ENCODE measurements at regions of chr16 and their contacts with region 1.

Region 1: GRCh38 chr16:74862741-74863244 is 88.2 kb upstream of the FA2H start:
- DNase-seq: peak; percentile 63
- ATAC-seq: no peak
- H3K4me3 ChIP-seq: no peak overlapping the region
- H3K4me3 Mint-ChIP-seq: no peak overlapping the region
- H3K27ac ChIP-seq: no peak overlapping the region
- H3K27ac Mint-ChIP-seq: peak overlapping the region; percentile 26
- H3K4me1 ChIP-seq: no peaks in the 10 kb centered on the region
- H3K4me1 Mint-ChIP-seq: peaks cover 3% of the 10 kb centered on the region
- H3K27me3 ChIP-seq: no peaks in the 10 kb centered on the region
- H3K27me3 Mint-ChIP-seq: no peaks in the 10 kb centered on the region
- CTCF ChIP-seq: peak; percentile 80

Region 2: GRCh38 chr16:74695450-74696422 is 167.1 kb before region 1 on chr16:
- CTCF ChIA-PET with region 1: interaction called, 26 read pairs
- POLR2A ChIA-PET with region 1: no interaction called
- intact Hi-C with region 1: no loop called
- DNase-seq: peak; percentile 81
- ATAC-seq: peak; percentile 85
- H3K4me3 ChIP-seq: peak overlapping the region in 4 of 5 experiments; percentile 26 to 60 (median 42)
- H3K4me3 Mint-ChIP-seq: peak overlapping the region; percentile 89
- H3K27ac ChIP-seq: peak overlapping the region; percentile 34 to 44
- H3K27ac Mint-ChIP-seq: peak overlapping the region; percentile 72
- H3K4me1 ChIP-seq: peaks cover 23 to 29% of the 10 kb centered on the region in 2 donors
- H3K4me1 Mint-ChIP-seq: peaks cover 37% of the 10 kb centered on the region
- H3K27me3 ChIP-seq: no peaks in the 10 kb centered on the region
- H3K27me3 Mint-ChIP-seq: no peaks in the 10 kb centered on the region
- CTCF ChIP-seq: no peak

Region 3: GRCh38 chr16:74813109-74813641 is 49.6 kb before region 1 on chr16:
- CTCF ChIA-PET with region 1: interaction called, 13 read pairs
- POLR2A ChIA-PET with region 1: no interaction called
- intact Hi-C with region 1: loop called (anchors 2 kb)
- DNase-seq: peak; percentile 63
- ATAC-seq: peak; percentile 99
- H3K4me3 ChIP-seq: no peak overlapping the region
- H3K4me3 Mint-ChIP-seq: no peak overlapping the region
- H3K27ac ChIP-seq: no peak overlapping the region
- H3K27ac Mint-ChIP-seq: no peak overlapping the region
- H3K4me1 ChIP-seq: peaks cover 0 to 5% of the 10 kb centered on the region in 2 donors
- H3K4me1 Mint-ChIP-seq: peaks cover 2% of the 10 kb centered on the region
- H3K27me3 ChIP-seq: peaks cover 0 to 5% (median 0%) of the 10 kb centered on the region in 4 experiments
- H3K27me3 Mint-ChIP-seq: peaks cover 10% of the 10 kb centered on the region
- CTCF ChIP-seq: peak; percentile 92

Region 4: DNA sequence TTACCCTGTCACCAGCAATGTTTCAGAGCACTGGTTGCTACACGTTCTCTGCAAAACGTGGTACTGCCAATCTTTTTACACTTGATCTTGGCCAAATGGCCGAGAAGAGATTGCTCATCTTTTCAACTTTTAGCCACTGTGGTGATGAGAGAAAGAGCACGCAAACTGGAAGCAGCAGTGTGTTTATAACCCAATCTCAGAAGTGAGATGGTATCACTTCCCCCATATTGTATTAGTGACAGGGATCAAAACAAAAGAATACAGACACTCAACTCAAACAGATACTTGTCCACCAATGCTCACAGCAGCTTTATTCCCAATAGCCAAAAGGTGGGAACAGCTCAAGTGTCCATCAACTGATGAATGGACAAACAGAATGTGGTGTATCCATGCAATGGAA is 16.1 kb before region 1 on chr16:
- CTCF ChIA-PET with region 1: interaction called, 11 read pairs
- POLR2A ChIA-PET with region 1: no interaction called
- intact Hi-C with region 1: no loop called
- DNase-seq: no peak
- ATAC-seq: no peak
- H3K4me3 ChIP-seq: no peak overlapping the region
- H3K4me3 Mint-ChIP-seq: no peak overlapping the region
- H3K27ac ChIP-seq: no peak overlapping the region
- H3K27ac Mint-ChIP-seq: no peak overlapping the region
- H3K4me1 ChIP-seq: no peaks in the 10 kb centered on the region
- H3K4me1 Mint-ChIP-seq: no peaks in the 10 kb centered on the region
- H3K27me3 ChIP-seq: no peaks in the 10 kb centered on the region
- H3K27me3 Mint-ChIP-seq: peaks cover 7% of the 10 kb centered on the region
- CTCF ChIP-seq: no peak